Lower lobe of right lung (tissue), 2 donors: ENCODE measurements at regions of chr14 and their contacts with region 1.

Region 1: DNA sequence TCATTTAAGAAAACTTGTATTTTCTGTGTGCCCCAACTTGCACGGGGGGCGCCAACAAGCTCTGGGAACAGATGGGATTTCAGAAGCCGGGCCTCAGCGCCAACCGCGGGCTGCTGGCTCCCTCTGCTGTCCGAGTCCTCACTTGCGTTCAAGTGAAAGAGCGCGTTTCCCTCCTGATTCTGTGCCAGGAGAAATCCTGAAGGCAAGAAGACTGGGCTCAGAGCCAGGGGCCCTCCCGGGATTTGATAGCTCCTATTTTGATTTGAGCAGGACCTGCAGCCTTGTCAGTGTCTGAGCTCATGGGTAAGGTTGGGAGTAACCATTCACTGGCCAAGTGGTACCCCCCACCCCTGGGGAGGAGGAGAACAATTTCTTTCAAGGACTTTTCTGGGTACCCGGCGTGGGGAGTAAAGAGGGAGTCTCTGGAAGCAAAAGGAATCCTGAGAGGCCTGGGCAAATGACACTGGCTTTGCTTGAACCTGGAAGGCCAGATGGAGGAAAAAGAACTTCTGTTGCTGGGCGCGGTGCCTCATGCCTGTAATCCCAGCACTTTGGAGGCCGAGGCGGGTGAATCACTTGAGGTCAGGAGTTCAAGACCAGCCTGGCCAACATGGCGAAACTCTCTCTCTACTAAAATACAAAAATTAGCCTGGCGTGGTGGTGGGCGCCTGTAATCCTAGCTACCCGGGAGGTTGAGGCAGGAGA is 179.0 kb upstream of the RGS6 start:
- DNase-seq: peak; percentile 89
- ATAC-seq: peak; percentile 84 to 91
- H3K4me3 ChIP-seq: no peak overlapping the region
- H3K27ac ChIP-seq: no peak overlapping the region
- H3K4me1 ChIP-seq: peaks cover 10% of the 10 kb centered on the region
- H3K27me3 ChIP-seq: no peaks in the 10 kb centered on the region
- CTCF ChIP-seq: peak; percentile 94

Region 2: GRCh38 chr14:71138448-71139293 is 614.6 kb before region 1 on chr14:
- intact Hi-C with region 1: loop called (anchors 10 kb)
- DNase-seq: peak; percentile 65
- ATAC-seq: peak; percentile 68 to 84
- H3K4me3 ChIP-seq: no peak overlapping the region
- H3K27ac ChIP-seq: no peak overlapping the region
- H3K4me1 ChIP-seq: peaks cover 5% of the 10 kb centered on the region
- H3K27me3 ChIP-seq: no peaks in the 10 kb centered on the region
- CTCF ChIP-seq: peak; percentile 93

Region 3: DNA sequence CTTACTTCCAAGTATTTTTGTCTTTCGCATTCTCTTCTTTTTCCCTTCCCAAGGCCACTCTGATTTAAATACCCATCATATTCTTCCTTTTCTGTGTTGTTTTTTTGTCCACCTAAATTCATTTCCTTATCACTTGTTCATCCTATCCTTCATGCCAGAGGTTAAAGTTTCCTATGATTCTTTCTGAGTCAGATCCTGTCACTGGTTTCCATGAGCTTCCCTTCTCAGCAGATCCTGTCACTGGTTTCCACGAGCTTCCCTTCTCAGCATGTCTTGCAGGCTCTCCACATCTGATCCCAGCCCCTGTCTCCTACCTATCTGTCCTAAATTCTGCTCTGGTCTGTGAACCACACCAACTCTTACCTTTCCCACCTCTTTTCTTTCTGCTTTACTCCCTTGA is 132.9 kb before region 1 on chr14:
- intact Hi-C with region 1: no loop called
- DNase-seq: no peak
- ATAC-seq: no peak
- H3K4me3 ChIP-seq: no peak overlapping the region
- H3K27ac ChIP-seq: no peak overlapping the region
- H3K4me1 ChIP-seq: no peaks in the 10 kb centered on the region
- H3K27me3 ChIP-seq: no peaks in the 10 kb centered on the region
- CTCF ChIP-seq: no peak